CD4-positive, alpha-beta memory T cell (primary cell): ENCODE measurements at regions of chr1 and their contacts with region 1.

Region 1: GRCh38 chr1:61641578-61642336 is 83.2 kb downstream of the TM2D1 start:
- DNase-seq: peak; percentile 31 to 51 (median 46)
- H3K4me3 ChIP-seq: peak overlapping the region in 1 of 2 donors; percentile 14
- H3K4me3 Mint-ChIP-seq: peak overlapping the region; percentile 56 to 86 (median 72)
- H3K27ac ChIP-seq: no peak overlapping the region
- H3K27ac Mint-ChIP-seq: no peak overlapping the region
- H3K4me1 ChIP-seq: peaks cover 4% of the 10 kb centered on the region
- H3K4me1 Mint-ChIP-seq: peaks cover 4 to 14% (median 9%) of the 10 kb centered on the region in 4 donors
- H3K27me3 ChIP-seq: no peaks in the 10 kb centered on the region
- H3K27me3 Mint-ChIP-seq: peaks cover 0 to 4% of the 10 kb centered on the region in 2 donors

Region 2: GRCh38 chr1:59971464-59971911 is 1670.3 kb before region 1 on chr1:
- CTCF ChIA-PET with region 1: no interaction called
- POLR2A ChIA-PET with region 1: no interaction called
- intact Hi-C with region 1: loop called (anchors 5 kb)
- DNase-seq: peak in 4 of 5 donors; percentile 9 to 20 (median 13)
- H3K4me3 ChIP-seq: no peak overlapping the region
- H3K4me3 Mint-ChIP-seq: peak overlapping the region in 1 of 8 donors; percentile 37
- H3K27ac ChIP-seq: no peak overlapping the region
- H3K27ac Mint-ChIP-seq: no peak overlapping the region
- H3K4me1 ChIP-seq: peaks cover 6% of the 10 kb centered on the region
- H3K4me1 Mint-ChIP-seq: peaks cover 0 to 6% (median 4%) of the 10 kb centered on the region in 4 donors
- H3K27me3 ChIP-seq: no peaks in the 10 kb centered on the region
- H3K27me3 Mint-ChIP-seq: peaks cover 11 to 26% of the 10 kb centered on the region in 2 donors

Region 3: GRCh38 chr1:61631436-61631835 is 10.3 kb before region 1 on chr1:
- CTCF ChIA-PET with region 1: interaction called, 15 read pairs
- POLR2A ChIA-PET with region 1: no interaction called
- intact Hi-C with region 1: no loop called
- DNase-seq: no peak
- H3K4me3 ChIP-seq: no peak overlapping the region
- H3K4me3 Mint-ChIP-seq: no peak overlapping the region
- H3K27ac ChIP-seq: no peak overlapping the region
- H3K27ac Mint-ChIP-seq: no peak overlapping the region
- H3K4me1 ChIP-seq: no peaks in the 10 kb centered on the region
- H3K4me1 Mint-ChIP-seq: no peaks in the 10 kb centered on the region
- H3K27me3 ChIP-seq: no peaks in the 10 kb centered on the region
- H3K27me3 Mint-ChIP-seq: peaks cover 0 to 4% of the 10 kb centered on the region in 2 donors

Region 4: DNA sequence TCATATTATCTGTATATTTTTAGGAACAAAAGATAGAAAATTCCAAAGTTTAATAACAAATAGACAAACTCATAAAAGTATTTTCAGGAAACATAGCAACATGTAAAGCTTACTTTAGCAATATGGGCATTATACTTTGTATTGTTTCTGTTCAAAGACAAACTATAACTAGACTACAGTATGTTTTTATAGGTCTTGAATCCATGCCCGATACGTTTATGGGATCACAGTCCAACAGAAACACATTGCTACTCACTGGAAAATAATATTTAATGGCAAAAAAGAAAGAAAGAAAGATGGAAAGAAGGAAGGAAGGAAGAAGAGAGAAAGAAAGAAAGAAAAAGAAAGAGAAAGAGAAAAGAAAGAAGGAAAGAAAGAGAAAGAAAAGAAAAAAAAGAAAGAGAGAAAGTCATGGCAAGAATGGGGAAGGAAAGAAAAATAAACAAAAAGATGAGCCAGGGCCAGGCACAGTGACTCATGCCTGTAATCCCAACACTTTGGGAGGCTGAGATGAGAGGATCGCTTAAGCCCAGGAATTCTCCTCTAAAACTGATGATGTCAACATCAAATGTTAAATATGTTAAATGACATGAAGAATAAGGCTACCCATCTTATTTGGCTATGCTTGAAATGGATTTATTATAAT is 50.5 kb after region 1 on chr1:
- CTCF ChIA-PET with region 1: no interaction called
- POLR2A ChIA-PET with region 1: no interaction called
- intact Hi-C with region 1: no loop called
- DNase-seq: no peak
- H3K4me3 ChIP-seq: no peak overlapping the region
- H3K4me3 Mint-ChIP-seq: no peak overlapping the region
- H3K27ac ChIP-seq: no peak overlapping the region
- H3K27ac Mint-ChIP-seq: peak overlapping the region in 2 of 7 donors; percentile 61 to 84
- H3K4me1 ChIP-seq: no peaks in the 10 kb centered on the region
- H3K4me1 Mint-ChIP-seq: peaks cover 0 to 3% (median 0%) of the 10 kb centered on the region in 4 donors
- H3K27me3 ChIP-seq: no peaks in the 10 kb centered on the region
- H3K27me3 Mint-ChIP-seq: no peaks in the 10 kb centered on the region